ENCODE measurements at regions of chr9 and their contacts with region 1.

Region 1: GRCh38 chr9:72271613-72272478 is 93.2 kb downstream of the ZFAND5 start:
- DNase-seq: peak in 33 of 42 donors; percentile 17 to 88 (median 59)

Region 2: DNA sequence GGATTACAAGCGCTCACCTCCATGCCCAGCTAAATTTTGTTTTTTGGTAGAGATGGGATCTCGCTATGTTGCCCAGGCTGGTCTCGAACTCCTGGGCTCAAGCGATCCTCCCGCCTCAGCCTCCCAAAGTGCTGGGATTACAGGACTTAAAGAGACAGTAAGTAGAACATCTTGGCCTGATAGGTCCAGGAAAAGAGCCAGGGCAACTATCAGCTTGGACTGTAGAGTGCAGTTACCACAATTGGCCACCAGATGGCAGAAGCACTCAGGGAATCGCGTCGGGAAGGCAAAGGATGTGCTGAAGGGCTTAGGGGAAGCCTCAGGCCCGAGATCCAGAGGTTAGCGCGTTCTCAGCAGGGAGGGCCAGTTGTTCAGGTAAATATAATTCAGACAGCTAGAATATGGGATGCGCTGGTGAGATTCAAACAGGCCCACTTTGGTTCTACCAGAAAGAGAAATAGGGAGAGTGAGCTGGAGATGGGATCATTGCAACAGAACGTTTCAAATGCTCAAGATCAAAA is 232.9 kb before region 1 on chr9:
- intact Hi-C with region 1: loop called (anchors 2 kb)
- DNase-seq: peak; percentile 35 to 94 (median 85)

Region 3: DNA sequence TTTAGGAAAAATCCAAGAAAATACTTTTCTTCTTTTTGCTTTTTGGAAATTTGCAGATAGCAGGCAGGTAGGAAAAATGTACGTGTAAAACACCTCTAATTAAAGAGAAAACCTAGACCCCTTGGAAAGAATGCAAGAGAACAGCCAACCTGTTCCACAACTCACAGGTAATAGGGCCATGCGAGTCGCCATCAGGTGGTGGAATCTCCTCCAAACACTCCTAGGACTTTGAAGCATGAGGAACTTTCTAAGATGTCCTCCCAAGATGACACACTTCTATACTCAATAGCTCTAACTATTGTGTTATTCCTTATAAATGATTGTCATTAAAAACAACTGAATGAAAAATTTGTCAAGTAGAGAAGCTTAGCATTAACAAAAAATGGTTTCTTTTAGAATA is 423.5 kb after region 1 on chr9:
- intact Hi-C with region 1: no loop called
- DNase-seq: no peak

Region 4: DNA sequence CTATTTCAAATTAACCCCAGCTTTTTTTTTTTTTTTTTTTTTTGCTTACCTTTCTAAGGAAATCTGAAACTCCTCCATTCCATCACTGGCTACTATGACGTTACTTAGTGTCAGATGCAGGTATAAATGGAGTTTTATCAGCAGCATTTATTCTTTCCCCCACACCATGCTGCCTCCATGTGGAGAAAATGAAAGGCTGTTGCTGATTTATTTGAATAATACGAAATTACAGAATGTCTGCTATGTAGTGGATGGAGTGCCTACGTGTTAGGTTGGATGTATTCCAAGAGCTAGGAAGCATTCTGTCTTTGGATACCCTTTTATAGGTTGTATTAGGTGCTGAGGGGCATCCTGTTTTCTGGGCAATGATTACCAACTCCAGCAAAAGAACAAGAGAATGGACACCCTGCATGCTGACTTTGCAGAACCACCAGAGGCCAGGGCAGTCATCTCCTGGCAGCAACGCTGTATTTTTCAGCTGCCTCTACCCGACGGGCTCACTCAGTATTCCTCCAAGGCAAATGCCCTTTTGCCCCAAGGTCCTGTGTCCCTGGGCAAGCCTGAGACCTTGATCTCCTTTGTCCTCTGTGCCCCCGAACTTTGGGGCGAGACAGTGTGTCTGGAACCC is 481.5 kb after region 1 on chr9:
- intact Hi-C with region 1: loop called (anchors 10 kb)
- DNase-seq: peak in 23 of 42 donors; percentile 14 to 55 (median 33)

Region 5: DNA sequence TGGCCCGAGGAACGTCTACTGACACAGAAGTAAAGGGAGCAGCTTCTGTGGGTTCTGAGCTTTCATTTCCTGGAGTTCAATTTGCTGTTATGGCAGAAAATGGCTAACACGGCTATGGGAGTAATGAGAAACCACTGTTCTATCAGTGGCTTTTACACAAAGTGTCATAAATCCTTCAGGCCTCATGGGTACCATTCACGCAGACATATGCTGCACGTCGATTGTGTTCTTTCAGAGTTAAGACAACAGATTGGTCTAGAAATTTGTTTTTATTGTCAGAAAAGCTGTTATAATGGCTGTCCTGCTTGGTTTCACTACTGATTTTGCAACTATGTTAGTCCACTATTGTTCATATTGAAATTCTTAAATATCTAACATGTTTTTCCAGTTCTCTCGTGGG is 545.6 kb after region 1 on chr9:
- intact Hi-C with region 1: loop called (anchors 5 kb)
- DNase-seq: no peak

Measured in head of caudate nucleus (tissue), 42 donors.